ENCODE measurements at regions of chr17 and their contacts with region 1.

Region 1: GRCh38 chr17:66255112-66255511 is 25.9 kb upstream of the APOH start:
- DNase-seq: peak; percentile 35
- ATAC-seq: peak; percentile 93
- H3K4me3 Mint-ChIP-seq: peak overlapping the region; percentile 51
- H3K27ac Mint-ChIP-seq: peak overlapping the region; percentile 86
- H3K4me1 Mint-ChIP-seq: peaks cover 19% of the 10 kb centered on the region
- H3K27me3 Mint-ChIP-seq: no peaks in the 10 kb centered on the region

Region 2: DNA sequence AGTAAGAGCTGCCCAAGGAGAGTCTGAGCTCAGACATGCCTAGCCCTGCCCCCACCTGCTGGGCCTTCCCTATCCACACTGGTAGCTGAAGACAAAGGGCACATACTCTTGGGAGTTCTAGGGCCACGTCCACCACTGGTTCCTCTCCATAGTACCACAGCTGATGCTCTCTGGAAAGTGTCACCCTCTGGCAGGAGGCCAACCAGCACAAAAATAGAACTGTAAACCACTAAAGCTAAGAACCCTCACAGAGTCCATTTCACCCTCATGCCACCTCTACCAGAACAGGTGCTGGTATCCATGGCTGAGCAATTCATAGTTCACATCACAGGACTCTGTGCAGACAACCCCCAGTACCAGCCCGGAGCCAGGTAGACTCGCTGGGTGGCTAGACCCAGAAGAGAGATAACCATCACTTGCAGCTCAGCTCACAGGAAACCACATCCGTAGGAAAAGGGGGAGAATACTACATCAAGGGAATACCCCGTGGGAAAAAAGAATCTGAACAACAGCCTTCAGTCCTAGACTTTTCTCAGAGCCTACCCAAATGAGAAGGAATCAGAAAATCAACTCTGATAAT is 178.5 kb before region 1 on chr17:
- CTCF ChIA-PET with region 1: no interaction called
- POLR2A ChIA-PET with region 1: no interaction called
- intact Hi-C with region 1: no loop called
- DNase-seq: no peak
- ATAC-seq: no peak
- H3K4me3 Mint-ChIP-seq: no peak overlapping the region
- H3K27ac Mint-ChIP-seq: no peak overlapping the region
- H3K4me1 Mint-ChIP-seq: peaks cover 21% of the 10 kb centered on the region
- H3K27me3 Mint-ChIP-seq: no peaks in the 10 kb centered on the region

Region 3: DNA sequence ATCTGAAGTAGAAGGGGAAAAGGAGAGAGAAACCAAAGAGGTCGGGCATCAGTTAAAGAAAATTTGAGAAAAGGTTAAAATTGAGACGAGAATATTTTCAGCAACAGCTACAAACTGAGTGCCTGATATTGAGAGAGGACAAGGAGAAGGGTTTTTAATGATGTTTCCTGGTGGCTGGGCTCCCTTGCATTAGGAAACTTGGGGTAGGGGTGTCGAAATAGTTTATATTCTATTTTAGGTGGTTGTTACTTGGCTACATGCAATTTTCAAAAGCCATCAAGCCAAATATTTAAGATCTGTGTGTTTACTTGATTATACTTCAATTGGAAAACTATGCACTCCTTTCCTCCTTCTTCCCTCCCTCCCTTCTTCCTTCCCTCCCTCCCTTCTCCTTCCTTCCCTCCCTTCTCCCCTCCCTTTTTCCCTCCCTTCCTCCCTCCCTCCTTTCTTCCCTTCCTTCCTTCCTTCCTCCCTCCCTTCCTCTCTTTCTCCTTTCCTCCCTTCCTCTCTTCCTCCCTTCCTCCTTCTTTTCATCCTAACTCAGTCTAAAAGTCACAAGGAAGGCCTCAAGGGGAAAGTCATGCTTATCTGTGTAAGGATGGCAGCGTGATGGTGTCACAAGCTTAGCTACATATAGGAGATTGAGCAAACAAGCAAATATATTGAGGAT is 24.1 kb before region 1 on chr17:
- CTCF ChIA-PET with region 1: no interaction called
- POLR2A ChIA-PET with region 1: no interaction called
- intact Hi-C with region 1: no loop called
- DNase-seq: no peak
- ATAC-seq: no peak
- H3K4me3 Mint-ChIP-seq: no peak overlapping the region
- H3K27ac Mint-ChIP-seq: no peak overlapping the region
- H3K4me1 Mint-ChIP-seq: peaks cover 5% of the 10 kb centered on the region
- H3K27me3 Mint-ChIP-seq: no peaks in the 10 kb centered on the region

Region 4: GRCh38 chr17:66373944-66374817 is 119.1 kb after region 1 on chr17:
- CTCF ChIA-PET with region 1: no interaction called
- POLR2A ChIA-PET with region 1: no interaction called
- intact Hi-C with region 1: no loop called
- DNase-seq: peak; percentile 53
- ATAC-seq: peak; percentile 59
- H3K4me3 Mint-ChIP-seq: peak overlapping the region; percentile 37
- H3K27ac Mint-ChIP-seq: peak overlapping the region; percentile 88
- H3K4me1 Mint-ChIP-seq: peaks cover 73% of the 10 kb centered on the region
- H3K27me3 Mint-ChIP-seq: no peaks in the 10 kb centered on the region

Region 5: DNA sequence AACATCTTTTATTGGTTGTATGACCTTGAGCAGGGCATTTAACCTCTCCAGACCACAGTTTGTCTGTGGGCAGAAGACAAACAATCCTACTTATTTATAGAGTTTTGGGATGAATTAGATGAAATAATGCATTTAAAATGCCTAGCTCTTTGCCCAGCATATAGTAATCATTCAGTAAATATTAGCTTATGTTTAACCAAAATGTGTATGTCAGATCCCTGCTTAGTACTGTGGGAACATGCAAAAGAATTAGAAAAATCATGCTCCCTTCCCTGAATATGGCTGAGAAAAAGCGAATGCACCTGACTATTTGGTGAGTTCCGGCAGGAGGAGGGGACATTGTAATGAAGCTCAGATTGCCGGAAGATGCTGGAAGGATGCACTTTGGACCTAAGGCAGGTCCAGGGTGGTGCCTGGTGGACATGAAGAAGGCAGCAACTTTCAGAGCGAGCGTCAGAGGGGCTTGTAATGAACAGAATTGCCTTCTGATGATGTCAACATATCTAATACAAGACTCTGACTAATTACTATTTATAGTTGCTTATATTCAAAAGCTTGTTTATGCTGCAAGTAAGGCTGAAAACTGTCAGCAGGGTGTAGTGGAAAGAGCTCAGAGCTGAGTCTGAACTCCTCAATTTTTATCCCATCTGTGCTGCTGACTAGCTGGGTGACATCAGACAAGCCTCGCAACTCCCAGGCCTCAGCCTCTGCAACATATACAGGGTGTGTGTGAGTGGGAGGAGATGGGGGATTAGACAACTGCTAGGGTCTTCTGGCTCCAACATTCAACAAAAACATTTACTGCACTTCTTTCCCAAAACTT is 268.5 kb after region 1 on chr17:
- CTCF ChIA-PET with region 1: no interaction called
- POLR2A ChIA-PET with region 1: no interaction called
- intact Hi-C with region 1: loop called in 1 of 2 experiments (anchors 5 kb)
- DNase-seq: no peak
- ATAC-seq: no peak
- H3K4me3 Mint-ChIP-seq: no peak overlapping the region
- H3K27ac Mint-ChIP-seq: no peak overlapping the region
- H3K4me1 Mint-ChIP-seq: peaks cover 58% of the 10 kb centered on the region
- H3K27me3 Mint-ChIP-seq: no peaks in the 10 kb centered on the region

Region 6: GRCh38 chr17:66625311-66625775 is 370.2 kb after region 1 on chr17:
- CTCF ChIA-PET with region 1: no interaction called
- POLR2A ChIA-PET with region 1: no interaction called
- intact Hi-C with region 1: loop called (anchors 1 kb)
- DNase-seq: no peak
- ATAC-seq: peak; percentile 60
- H3K4me3 Mint-ChIP-seq: no peak overlapping the region
- H3K27ac Mint-ChIP-seq: no peak overlapping the region
- H3K4me1 Mint-ChIP-seq: peaks cover 26% of the 10 kb centered on the region
- H3K27me3 Mint-ChIP-seq: no peaks in the 10 kb centered on the region

Region 7: DNA sequence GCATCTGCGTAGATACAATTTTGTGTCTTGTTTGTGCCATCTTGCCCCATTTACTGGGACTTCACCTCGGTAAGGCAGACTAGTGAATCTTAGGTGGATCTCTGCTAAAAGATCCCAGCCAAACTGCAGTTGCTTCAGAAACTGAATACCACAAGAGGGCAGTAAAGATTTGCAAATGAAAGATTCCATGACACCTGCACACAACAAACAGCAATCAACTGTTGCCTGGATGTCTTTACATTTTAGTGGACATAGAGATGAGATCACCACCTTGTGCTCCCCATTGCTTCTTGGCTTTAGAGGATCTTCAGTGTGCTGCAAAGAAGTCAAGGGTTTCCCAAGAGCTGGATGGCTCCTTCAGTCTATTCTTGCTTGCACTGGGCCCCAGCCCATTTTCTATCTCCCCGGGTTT is 460.6 kb after region 1 on chr17:
- CTCF ChIA-PET with region 1: no interaction called
- POLR2A ChIA-PET with region 1: no interaction called
- intact Hi-C with region 1: loop called in 1 of 2 experiments (anchors 5 kb)
- DNase-seq: no peak
- ATAC-seq: peak; percentile 50
- H3K4me3 Mint-ChIP-seq: no peak overlapping the region
- H3K27ac Mint-ChIP-seq: no peak overlapping the region
- H3K4me1 Mint-ChIP-seq: peaks cover 31% of the 10 kb centered on the region
- H3K27me3 Mint-ChIP-seq: no peaks in the 10 kb centered on the region